ENCODE measurements at regions of chr4 and their contacts with region 1.

Region 1: DNA sequence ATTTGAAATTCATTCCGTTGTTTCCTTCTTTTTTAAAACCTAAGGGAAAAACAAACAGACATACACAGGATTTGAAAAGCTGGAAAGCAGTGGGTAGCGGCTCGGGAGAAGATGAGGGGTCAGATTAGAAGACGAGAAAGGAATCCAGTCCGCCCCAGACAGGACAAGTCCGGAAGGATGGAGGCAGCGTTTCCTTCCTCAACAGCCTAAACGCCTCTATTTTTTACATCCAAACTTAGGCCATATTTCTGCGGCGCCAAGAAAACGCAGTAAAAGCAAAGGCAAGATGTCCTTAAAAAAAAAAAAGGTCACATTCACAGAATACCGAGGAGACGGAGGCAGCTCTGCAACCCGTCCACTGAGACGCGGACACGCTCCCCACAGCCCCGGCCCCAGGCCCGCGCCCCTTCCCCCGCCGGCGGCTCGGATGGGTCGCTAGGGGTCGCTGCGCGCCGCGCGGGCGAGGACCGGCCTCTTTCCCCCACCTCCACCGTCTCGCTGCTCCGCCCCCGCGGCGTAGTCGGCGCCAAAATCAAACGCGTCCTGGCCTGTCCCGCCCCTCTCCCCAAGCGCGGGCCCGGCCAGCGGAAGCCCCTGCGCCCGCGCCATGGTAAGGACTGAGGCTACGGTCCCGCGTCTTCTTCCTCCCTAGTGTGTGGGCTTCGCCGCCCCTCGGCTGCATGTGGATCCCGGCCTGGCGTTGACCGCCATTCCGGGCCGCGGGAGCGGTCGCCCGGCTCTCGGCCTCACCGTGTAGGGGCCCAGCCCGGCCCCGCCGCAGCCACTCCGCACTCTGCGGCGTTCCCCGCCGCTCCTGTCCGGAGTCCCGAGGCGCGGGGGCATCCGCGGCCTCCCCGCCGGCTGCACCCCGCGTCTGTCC is at the start of gene MND1:
- DNase-seq: peak; percentile 95
- H3K4me3 Mint-ChIP-seq: peak within 1 kb of the TSS; percentile 93
- H3K27ac Mint-ChIP-seq: peak within 1 kb of the TSS; percentile 86
- H3K4me1 Mint-ChIP-seq: peaks cover 26% of the 10 kb centered on the region
- H3K27me3 Mint-ChIP-seq: no peaks in the 10 kb centered on the region
- total RNA-seq, gene MND1: 32.0 to 36.1 TPM

Region 2: GRCh38 chr4:153153339-153153871 is 191.0 kb before region 1 on chr4:
- CTCF ChIA-PET with region 1: interaction called, 3 read pairs
- POLR2A ChIA-PET with region 1: no interaction called
- intact Hi-C with region 1: loop called (anchors 2 kb)
- DNase-seq: peak; percentile 89
- H3K4me3 Mint-ChIP-seq: peak overlapping the region; percentile 78
- H3K27ac Mint-ChIP-seq: peak overlapping the region; percentile 83
- H3K4me1 Mint-ChIP-seq: peaks cover 53% of the 10 kb centered on the region
- H3K27me3 Mint-ChIP-seq: peaks cover 2% of the 10 kb centered on the region

Region 3: GRCh38 chr4:153432968-153433753 is 88.8 kb after region 1 on chr4:
- CTCF ChIA-PET with region 1: interaction called, 15 read pairs
- POLR2A ChIA-PET with region 1: no interaction called
- intact Hi-C with region 1: loop called (anchors 1 kb)
- DNase-seq: peak; percentile 88
- H3K4me3 Mint-ChIP-seq: peak overlapping the region; percentile 77
- H3K27ac Mint-ChIP-seq: peak overlapping the region; percentile 74
- H3K4me1 Mint-ChIP-seq: peaks cover 52% of the 10 kb centered on the region
- H3K27me3 Mint-ChIP-seq: no peaks in the 10 kb centered on the region

Region 4: GRCh38 chr4:153521999-153522801 is 177.8 kb after region 1 on chr4:
- CTCF ChIA-PET with region 1: no interaction called
- POLR2A ChIA-PET with region 1: no interaction called
- intact Hi-C with region 1: loop called (anchors 2 kb)
- DNase-seq: peak; percentile 80
- H3K4me3 Mint-ChIP-seq: peak overlapping the region; percentile 67
- H3K27ac Mint-ChIP-seq: peak overlapping the region; percentile 96
- H3K4me1 Mint-ChIP-seq: peaks cover 91% of the 10 kb centered on the region
- H3K27me3 Mint-ChIP-seq: no peaks in the 10 kb centered on the region

Region 5: GRCh38 chr4:153649572-153649991 is 305.2 kb after region 1 on chr4:
- CTCF ChIA-PET with region 1: interaction called, 43 read pairs
- POLR2A ChIA-PET with region 1: no interaction called
- intact Hi-C with region 1: no loop called
- DNase-seq: no peak
- H3K4me3 Mint-ChIP-seq: no peak overlapping the region
- H3K27ac Mint-ChIP-seq: no peak overlapping the region
- H3K4me1 Mint-ChIP-seq: peaks cover 36% of the 10 kb centered on the region
- H3K27me3 Mint-ChIP-seq: no peaks in the 10 kb centered on the region